ENCODE measurements at regions of chr19 and their contacts with region 1.

Region 1: GRCh38 chr19:3304871-3305423 is 61.4 kb upstream of the NFIC start:
- DNase-seq: peak; percentile 80
- ATAC-seq: peak; percentile 66
- H3K4me3 Mint-ChIP-seq: no peak overlapping the region
- H3K27ac Mint-ChIP-seq: no peak overlapping the region
- H3K4me1 Mint-ChIP-seq: no peaks in the 10 kb centered on the region
- H3K27me3 Mint-ChIP-seq: peaks cover 8% of the 10 kb centered on the region

Region 2: DNA sequence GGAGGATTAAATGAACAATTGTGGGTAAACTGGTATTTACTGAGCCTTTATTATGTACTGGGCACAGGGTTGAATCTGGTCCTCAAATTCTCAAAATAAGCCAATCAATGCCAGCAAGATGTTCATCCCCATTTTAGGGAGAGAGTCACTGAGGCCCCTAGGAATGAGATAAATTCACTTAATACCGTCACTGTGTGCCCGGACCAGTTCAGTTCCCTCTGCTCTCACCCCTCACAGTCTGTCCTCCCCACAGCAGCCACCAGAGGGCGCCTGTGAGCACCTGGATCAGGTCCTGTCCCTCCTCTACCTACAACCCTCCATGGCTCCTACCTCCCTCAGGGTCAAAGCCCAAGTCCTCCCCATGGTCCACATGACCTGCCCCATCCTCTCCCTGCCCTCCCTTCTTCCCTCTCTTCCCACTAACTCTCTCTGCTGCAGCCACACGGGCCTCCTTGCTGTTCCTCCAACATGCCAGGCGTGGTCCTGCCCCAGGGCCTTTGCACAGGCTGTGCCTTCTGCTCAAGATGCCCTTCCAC is 19.4 kb after region 1 on chr19:
- CTCF ChIA-PET with region 1: interaction called, 13 read pairs
- DNase-seq: peak; percentile 84
- ATAC-seq: peak; percentile 79
- H3K4me3 Mint-ChIP-seq: no peak overlapping the region
- H3K27ac Mint-ChIP-seq: no peak overlapping the region
- H3K4me1 Mint-ChIP-seq: no peaks in the 10 kb centered on the region
- H3K27me3 Mint-ChIP-seq: no peaks in the 10 kb centered on the region

Region 3: DNA sequence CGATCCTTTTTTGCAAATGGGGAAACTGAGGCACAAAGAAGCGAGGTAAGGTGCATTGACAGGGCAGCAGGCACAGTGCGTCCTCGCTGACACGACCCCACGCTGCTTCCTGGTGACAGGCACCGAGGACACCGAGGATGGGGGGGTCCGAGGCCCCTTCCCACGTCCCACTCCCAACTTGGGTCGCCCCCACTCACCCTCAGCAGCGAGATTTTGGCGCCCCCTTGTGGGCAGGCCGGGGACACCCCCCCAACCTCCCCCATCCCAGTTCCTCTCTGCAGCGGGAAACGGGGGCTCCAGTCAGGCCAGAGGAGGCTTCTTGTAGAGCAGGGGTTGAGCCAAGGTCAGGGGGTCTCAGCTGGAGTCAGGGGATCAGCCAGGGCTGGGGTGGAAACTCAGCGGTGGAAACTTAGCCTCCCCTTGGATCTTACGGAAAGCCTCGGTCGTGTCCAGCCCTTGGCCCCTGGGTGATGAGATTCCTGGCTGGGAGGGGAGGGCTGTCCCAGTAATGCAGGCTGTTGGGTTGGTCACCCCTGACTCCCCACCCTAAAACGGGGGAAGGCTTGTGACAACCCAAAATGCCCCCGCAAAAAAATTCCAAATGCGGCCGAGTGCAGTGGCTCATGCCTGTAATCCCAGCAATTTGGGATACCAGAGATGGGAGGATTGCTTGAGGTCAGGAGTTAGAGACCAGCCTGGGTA is 167.2 kb after region 1 on chr19:
- CTCF ChIA-PET with region 1: interaction called, 17 read pairs
- DNase-seq: no peak
- ATAC-seq: no peak
- H3K4me3 Mint-ChIP-seq: no peak overlapping the region
- H3K27ac Mint-ChIP-seq: no peak overlapping the region
- H3K4me1 Mint-ChIP-seq: no peaks in the 10 kb centered on the region
- H3K27me3 Mint-ChIP-seq: no peaks in the 10 kb centered on the region

Measured in activated CD8-positive, alpha-beta memory T cell treated with anti-CD3 and anti-CD28 coated beads, Interleukin-2, amount 10 ng/mL, durations not matched to agents 7 days and 5 days (primary cell).